OCI-LY7 (cell line): ENCODE measurements at regions of chr12 and their contacts with region 1.

Region 1: GRCh38 chr12:31353750-31354708 is 28.1 kb upstream of the SINHCAF start:
- DNase-seq: peak; percentile 31
- H3K4me3 ChIP-seq: no peak overlapping the region
- H3K27ac ChIP-seq: no peak overlapping the region
- H3K4me1 ChIP-seq: peaks cover 9% of the 10 kb centered on the region
- CTCF ChIP-seq: no peak

Region 2: DNA sequence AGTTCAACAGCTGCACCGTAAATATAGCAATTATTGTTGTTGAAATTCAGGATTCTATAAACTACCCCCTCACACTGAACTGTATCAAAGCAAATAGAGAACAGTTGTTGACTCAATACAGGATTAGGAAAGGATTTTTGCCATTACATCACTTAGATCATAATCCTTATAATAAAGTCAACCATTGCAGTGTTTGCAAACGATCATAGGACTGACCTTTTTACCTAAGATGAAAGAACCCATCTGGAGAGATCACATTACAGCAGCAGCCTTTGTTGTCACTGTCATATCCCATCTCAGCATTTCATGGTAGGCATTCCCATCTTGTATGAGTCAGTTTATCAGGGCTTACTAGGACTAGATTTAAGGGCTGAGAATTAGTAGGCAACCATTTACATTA is 754.4 kb before region 1 on chr12:
- CTCF ChIA-PET with region 1: no interaction called
- POLR2A ChIA-PET with region 1: no interaction called
- intact Hi-C with region 1: no loop called
- DNase-seq: no peak
- H3K4me3 ChIP-seq: no peak overlapping the region
- H3K27ac ChIP-seq: no peak overlapping the region
- H3K4me1 ChIP-seq: no peaks in the 10 kb centered on the region
- CTCF ChIP-seq: no peak

Region 3: DNA sequence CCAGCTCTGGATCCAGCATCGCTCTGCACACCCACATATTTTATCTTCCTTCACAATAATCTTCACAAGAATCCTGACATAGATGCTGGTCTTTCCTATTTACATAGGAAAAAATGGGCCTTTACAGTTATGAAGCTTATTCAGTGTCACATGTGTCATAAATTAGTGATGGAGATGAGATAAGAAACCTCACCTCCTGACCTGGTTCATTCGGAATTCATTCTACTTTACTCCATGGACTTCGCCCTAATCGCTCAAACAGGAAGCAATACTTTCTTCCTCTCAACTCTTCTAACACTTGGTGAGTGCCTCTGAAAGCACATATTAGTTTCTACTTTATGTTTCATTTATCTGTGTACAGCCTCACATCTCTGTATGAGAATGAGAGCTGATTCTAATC is 16.1 kb before region 1 on chr12:
- CTCF ChIA-PET with region 1: no interaction called
- POLR2A ChIA-PET with region 1: interaction called, 10 read pairs
- intact Hi-C with region 1: no loop called
- DNase-seq: no peak
- H3K4me3 ChIP-seq: no peak overlapping the region
- H3K27ac ChIP-seq: no peak overlapping the region
- H3K4me1 ChIP-seq: no peaks in the 10 kb centered on the region
- CTCF ChIP-seq: no peak

Region 4: DNA sequence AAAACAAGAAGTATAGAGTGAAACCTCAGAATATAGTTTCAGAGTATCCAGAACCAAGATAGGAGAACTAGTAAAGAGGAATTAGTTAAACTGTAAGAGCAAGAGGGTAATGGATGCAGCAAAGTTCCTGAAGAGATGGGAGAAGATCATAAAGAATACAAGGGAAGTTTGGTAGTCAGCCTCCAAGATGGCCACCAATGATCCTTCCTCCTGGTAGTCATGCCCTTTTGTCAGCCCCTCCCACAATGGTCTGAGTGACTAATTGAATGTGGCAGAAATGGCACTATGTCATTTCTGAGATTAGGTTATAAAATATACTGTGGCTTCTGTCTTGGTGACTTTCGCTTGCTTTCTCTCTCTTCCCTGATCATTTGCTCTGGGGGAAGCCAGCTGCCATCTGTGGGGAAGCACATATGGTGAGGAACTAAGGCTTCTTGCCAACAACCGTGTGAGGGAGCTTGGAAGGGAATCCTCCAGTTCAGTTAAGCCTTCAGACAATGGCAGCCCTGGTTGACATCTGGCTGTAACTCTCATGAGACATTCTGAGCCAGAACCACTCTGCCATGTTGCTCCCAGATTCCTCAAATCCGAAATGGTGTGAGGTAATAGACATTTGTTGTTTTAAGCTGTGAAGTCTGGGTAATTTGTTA is 430.1 kb after region 1 on chr12:
- CTCF ChIA-PET with region 1: no interaction called
- POLR2A ChIA-PET with region 1: no interaction called
- intact Hi-C with region 1: no loop called
- DNase-seq: no peak
- H3K4me3 ChIP-seq: no peak overlapping the region
- H3K27ac ChIP-seq: no peak overlapping the region
- H3K4me1 ChIP-seq: peaks cover 5% of the 10 kb centered on the region
- CTCF ChIP-seq: no peak